ENCODE measurements at regions of chr6 and their contacts with region 1.

Region 1: DNA sequence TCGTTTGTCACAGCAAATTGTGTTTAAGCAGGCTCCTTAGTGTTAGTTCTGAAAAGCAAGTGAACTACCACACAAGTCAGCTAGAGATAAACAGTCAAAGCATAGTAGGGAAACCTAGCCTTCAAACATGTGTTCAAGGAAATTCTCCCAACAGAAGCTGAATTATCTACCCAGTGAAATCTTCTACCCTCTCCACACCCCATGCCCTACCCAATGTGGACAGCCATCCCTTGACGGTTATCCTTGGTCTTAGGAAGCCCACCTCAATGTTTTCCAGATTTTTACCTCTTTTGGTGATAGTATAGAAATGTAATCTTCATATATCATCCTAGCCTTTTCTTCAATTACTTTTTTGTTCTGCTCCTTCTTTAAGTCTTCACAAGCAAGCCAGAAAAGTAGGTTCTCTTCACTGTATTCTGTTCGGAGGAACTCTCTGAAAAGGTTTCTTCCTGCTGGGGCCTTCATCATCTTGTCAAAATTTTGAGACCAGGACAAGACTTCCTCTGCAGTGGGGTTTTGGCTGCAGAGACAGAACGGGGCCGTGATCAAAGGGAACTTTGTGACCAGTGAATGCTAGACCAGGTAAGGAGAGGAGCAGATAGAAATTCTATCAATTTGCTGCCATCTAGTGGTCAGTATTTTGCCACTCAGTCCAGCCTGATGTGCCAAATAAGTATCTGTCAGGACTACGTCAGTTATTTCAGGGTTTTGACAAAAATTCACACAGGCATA is 21.6 kb upstream of the MTRF1L start:
- DNase-seq: peak; percentile 77
- H3K4me3 ChIP-seq: no peak overlapping the region
- H3K27ac ChIP-seq: no peak overlapping the region
- H3K4me1 ChIP-seq: no peaks in the 10 kb centered on the region
- H3K27me3 ChIP-seq: no peaks in the 10 kb centered on the region
- CTCF ChIP-seq: peak; percentile 67 to 76
- POLR2A ChIP-seq: no peak

Region 2: GRCh38 chr6:152750694-152751093 is 273.4 kb before region 1 on chr6 and contains the start of gene VIP:
- CTCF ChIA-PET with region 1: interaction called, 4 read pairs
- POLR2A ChIA-PET with region 1: no interaction called
- dilution Hi-C with region 1: no loop called
- intact Hi-C with region 1: loop called (anchors 2 kb)
- DNase-seq: peak; percentile 46
- H3K4me3 ChIP-seq: no peak within 1 kb of the TSS
- H3K27ac ChIP-seq: no peak within 1 kb of the TSS
- H3K4me1 ChIP-seq: no peaks in the 10 kb centered on the region
- H3K27me3 ChIP-seq: peaks cover 0 to 2% of the 10 kb centered on the region in 2 experiments
- CTCF ChIP-seq: no peak
- POLR2A ChIP-seq: no peak
- total RNA-seq, gene VIP: 1.2 and 2.0 TPM in 2 replicates

Region 3: DNA sequence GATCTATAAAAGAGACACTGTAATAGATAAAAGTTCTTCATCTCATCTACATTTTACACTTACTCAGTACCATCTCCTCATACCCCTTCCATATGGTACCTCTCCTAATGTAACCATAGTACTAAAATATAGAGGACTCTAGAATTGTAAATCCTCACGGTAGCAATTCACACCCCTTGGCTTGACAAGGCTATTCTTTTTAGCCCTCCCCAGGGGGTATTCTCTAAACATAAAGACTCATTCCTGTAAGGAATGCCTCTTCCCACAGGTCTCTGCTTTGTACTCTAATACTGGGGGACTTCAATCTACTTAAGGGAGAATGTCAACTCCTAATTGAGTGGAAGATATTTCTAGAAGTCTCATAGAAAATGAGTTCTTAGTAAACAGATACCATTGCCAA is 187.6 kb before region 1 on chr6:
- CTCF ChIA-PET with region 1: no interaction called
- POLR2A ChIA-PET with region 1: no interaction called
- dilution Hi-C with region 1: no loop called
- intact Hi-C with region 1: no loop called
- DNase-seq: no peak
- H3K4me3 ChIP-seq: no peak overlapping the region
- H3K27ac ChIP-seq: no peak overlapping the region
- H3K4me1 ChIP-seq: no peaks in the 10 kb centered on the region
- H3K27me3 ChIP-seq: no peaks in the 10 kb centered on the region
- CTCF ChIP-seq: no peak
- POLR2A ChIP-seq: no peak

Region 4: DNA sequence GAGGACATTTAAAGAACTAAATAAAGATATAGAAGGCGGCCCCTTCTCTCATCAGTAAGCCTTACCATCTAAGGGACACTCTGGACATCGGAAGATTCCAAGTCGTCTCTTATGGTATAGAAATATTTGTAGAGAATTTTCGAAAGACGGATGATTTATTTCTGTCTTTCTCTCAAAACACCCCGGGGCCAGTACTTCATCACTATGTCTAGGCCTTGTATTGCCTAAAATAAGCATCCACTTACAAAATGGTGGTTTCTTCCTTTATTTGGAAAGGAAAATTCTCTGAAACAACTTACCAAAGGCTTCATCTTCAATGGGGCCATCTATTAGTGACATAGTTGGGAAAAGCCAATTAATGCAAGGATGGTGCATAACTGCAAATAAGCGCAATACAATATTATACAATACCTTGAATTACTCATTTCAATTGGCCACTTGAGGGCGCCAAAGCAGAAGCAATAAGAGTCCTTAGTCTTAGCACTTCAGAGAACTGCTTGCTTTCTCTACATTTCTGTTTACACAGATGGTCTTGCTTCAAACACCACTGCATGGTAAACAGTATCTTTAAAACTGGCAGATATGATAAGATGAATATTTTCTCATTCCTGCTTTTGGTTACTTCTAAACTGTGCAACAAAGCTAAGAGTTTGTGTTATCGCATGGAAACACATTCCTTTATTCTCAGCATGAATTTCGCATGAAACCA is 160.4 kb before region 1 on chr6:
- CTCF ChIA-PET with region 1: no interaction called
- POLR2A ChIA-PET with region 1: no interaction called
- dilution Hi-C with region 1: no loop called
- intact Hi-C with region 1: loop called (anchors 1 kb)
- DNase-seq: peak; percentile 78
- H3K4me3 ChIP-seq: no peak overlapping the region
- H3K27ac ChIP-seq: no peak overlapping the region
- H3K4me1 ChIP-seq: no peaks in the 10 kb centered on the region
- H3K27me3 ChIP-seq: no peaks in the 10 kb centered on the region
- CTCF ChIP-seq: peak; percentile 48 to 54
- POLR2A ChIP-seq: no peak

Region 5: GRCh38 chr6:152922706-152923105 is 101.4 kb before region 1 on chr6:
- CTCF ChIA-PET with region 1: no interaction called
- POLR2A ChIA-PET with region 1: no interaction called
- dilution Hi-C with region 1: no loop called
- intact Hi-C with region 1: no loop called
- DNase-seq: no peak
- H3K4me3 ChIP-seq: no peak overlapping the region
- H3K27ac ChIP-seq: no peak overlapping the region
- H3K4me1 ChIP-seq: peaks cover 9% of the 10 kb centered on the region
- H3K27me3 ChIP-seq: no peaks in the 10 kb centered on the region
- CTCF ChIP-seq: no peak
- POLR2A ChIP-seq: no peak

Region 6: DNA sequence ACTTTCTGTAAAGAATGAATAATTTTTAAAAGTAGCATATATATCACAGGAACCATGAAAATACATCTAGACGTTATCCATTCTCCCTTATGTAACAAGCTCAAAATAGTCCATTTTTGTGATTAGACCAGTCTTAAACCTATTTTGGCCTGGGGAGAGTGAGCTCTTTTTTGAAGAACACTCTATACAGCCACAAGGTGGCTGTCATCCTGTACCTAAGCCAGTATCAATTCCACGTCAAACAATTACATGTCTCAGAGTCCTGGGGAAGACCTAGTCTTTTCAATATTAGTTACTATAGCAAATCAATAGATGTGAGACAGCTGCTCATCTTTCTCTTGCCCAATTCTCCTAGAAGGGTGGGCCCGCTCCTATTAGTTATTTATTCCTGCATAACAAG is 69.7 kb before region 1 on chr6:
- CTCF ChIA-PET with region 1: interaction called, 72 read pairs
- POLR2A ChIA-PET with region 1: no interaction called
- dilution Hi-C with region 1: no loop called
- intact Hi-C with region 1: loop called (anchors 1 kb)
- DNase-seq: no peak
- H3K4me3 ChIP-seq: no peak overlapping the region
- H3K27ac ChIP-seq: no peak overlapping the region
- H3K4me1 ChIP-seq: peaks cover 11% of the 10 kb centered on the region
- H3K27me3 ChIP-seq: no peaks in the 10 kb centered on the region
- CTCF ChIP-seq: peak in 1 of 2 donors; percentile 12
- POLR2A ChIP-seq: no peak

Region 7: GRCh38 chr6:152982768-152983636 is 41.1 kb before region 1 on chr6 and contains the start of gene FBXO5:
- CTCF ChIA-PET with region 1: no interaction called
- POLR2A ChIA-PET with region 1: no interaction called
- dilution Hi-C with region 1: no loop called
- intact Hi-C with region 1: loop called (anchors 2 kb)
- DNase-seq: peak; percentile 97
- H3K4me3 ChIP-seq: peak within 1 kb of the TSS; percentile 76 to 99 (median 97)
- H3K27ac ChIP-seq: peak within 1 kb of the TSS; percentile 86
- H3K4me1 ChIP-seq: peaks cover 41% of the 10 kb centered on the region
- H3K27me3 ChIP-seq: no peaks in the 10 kb centered on the region
- CTCF ChIP-seq: no peak
- POLR2A ChIP-seq: peak; percentile 81
- total RNA-seq, gene FBXO5: 27.1 and 28.1 TPM in 2 replicates

Region 8: DNA sequence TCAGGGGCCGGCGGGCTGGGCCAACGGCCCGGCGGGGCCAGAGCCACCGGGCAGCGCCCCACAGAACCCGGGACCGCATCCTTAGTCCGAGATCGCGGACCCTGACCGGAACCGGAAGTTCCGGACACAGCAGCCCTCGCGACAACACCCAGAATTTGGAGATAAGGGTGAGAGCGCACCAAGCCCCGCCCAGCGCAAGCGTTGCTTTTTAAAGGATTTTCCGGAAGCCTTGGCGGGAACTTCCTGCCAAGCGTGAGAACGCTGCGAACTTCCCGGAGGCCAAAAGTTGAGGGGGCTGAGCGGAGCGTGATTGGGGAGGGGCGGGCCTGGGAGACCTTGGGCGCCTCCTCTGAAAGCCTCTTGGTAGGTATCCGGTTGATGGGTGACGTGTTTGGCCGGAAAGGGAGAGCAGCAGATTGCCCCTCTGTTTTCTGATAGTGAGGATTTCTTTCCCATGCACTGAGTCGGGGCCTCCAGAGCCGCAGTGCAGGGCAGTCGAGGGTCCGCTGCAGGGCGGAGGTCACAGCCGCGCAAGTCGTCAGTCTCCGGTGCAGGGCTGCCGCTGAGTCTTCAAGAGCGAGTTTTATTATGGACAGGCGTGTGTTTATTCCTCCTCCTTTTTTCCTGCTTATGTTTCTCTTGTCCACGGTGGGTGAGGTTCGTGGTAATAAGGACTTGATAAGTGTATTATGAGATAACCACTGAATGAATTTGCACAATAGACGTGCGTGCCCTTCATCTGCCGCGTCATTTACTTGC is 21.4 kb before region 1 on chr6 and contains the start of gene MTRF1L:
- CTCF ChIA-PET with region 1: no interaction called
- POLR2A ChIA-PET with region 1: no interaction called
- dilution Hi-C with region 1: no loop called
- intact Hi-C with region 1: loop called (anchors 1 kb)
- DNase-seq: peak; percentile 97
- H3K4me3 ChIP-seq: peak within 1 kb of the TSS; percentile 72 to 96 (median 90)
- H3K27ac ChIP-seq: peak within 1 kb of the TSS; percentile 77
- H3K4me1 ChIP-seq: peaks cover 22% of the 10 kb centered on the region
- H3K27me3 ChIP-seq: no peaks in the 10 kb centered on the region
- CTCF ChIP-seq: no peak
- POLR2A ChIP-seq: peak; percentile 92
- total RNA-seq, gene MTRF1L: 27.5 and 31.2 TPM in 2 replicates

Measured in endothelial cell of umbilical vein (primary cell).